ENCODE measurements at regions of chr4 and their contacts with region 1.

Region 1: GRCh38 chr4:103091601-103092223 is 7.9 kb downstream of the BDH2 start:
- DNase-seq: peak; percentile 62
- ATAC-seq: peak; percentile 55
- H3K4me3 ChIP-seq: no peak overlapping the region
- H3K27ac ChIP-seq: no peak overlapping the region
- H3K4me1 ChIP-seq: no peaks in the 10 kb centered on the region
- H3K27me3 ChIP-seq: no peaks in the 10 kb centered on the region
- CTCF ChIP-seq: peak; percentile 80

Region 2: GRCh38 chr4:102620697-102621497 is 470.8 kb before region 1 on chr4:
- CTCF ChIA-PET with region 1: no interaction called
- POLR2A ChIA-PET with region 1: no interaction called
- intact Hi-C with region 1: loop called (anchors 1 kb)
- DNase-seq: peak; percentile 78
- ATAC-seq: peak; percentile 90
- H3K4me3 ChIP-seq: peak overlapping the region; percentile 60
- H3K27ac ChIP-seq: peak overlapping the region; percentile 68
- H3K4me1 ChIP-seq: peaks cover 24% of the 10 kb centered on the region
- H3K27me3 ChIP-seq: no peaks in the 10 kb centered on the region
- CTCF ChIP-seq: peak; percentile 86

Region 3: DNA sequence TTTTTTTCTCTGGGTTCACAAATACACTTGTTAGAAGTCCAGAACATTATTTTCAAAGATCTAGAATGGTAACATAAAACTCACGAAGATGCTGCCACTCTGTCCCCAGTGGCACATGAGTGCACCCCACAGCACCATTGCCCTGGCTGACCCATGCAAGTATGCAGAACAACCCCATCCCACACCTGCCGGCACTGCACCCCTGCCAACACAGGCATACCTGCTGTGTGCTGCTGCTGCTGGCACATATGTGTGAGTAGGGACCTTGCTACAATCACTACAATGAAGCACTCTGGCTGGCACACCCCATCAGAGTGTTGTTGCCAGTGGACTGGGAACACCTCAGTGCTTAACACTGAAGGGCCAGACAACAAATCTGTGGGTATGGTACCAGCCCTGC is 156.0 kb before region 1 on chr4:
- CTCF ChIA-PET with region 1: no interaction called
- POLR2A ChIA-PET with region 1: no interaction called
- intact Hi-C with region 1: no loop called
- DNase-seq: no peak
- ATAC-seq: no peak
- H3K4me3 ChIP-seq: no peak overlapping the region
- H3K27ac ChIP-seq: no peak overlapping the region
- H3K4me1 ChIP-seq: no peaks in the 10 kb centered on the region
- H3K27me3 ChIP-seq: no peaks in the 10 kb centered on the region
- CTCF ChIP-seq: no peak

Region 4: DNA sequence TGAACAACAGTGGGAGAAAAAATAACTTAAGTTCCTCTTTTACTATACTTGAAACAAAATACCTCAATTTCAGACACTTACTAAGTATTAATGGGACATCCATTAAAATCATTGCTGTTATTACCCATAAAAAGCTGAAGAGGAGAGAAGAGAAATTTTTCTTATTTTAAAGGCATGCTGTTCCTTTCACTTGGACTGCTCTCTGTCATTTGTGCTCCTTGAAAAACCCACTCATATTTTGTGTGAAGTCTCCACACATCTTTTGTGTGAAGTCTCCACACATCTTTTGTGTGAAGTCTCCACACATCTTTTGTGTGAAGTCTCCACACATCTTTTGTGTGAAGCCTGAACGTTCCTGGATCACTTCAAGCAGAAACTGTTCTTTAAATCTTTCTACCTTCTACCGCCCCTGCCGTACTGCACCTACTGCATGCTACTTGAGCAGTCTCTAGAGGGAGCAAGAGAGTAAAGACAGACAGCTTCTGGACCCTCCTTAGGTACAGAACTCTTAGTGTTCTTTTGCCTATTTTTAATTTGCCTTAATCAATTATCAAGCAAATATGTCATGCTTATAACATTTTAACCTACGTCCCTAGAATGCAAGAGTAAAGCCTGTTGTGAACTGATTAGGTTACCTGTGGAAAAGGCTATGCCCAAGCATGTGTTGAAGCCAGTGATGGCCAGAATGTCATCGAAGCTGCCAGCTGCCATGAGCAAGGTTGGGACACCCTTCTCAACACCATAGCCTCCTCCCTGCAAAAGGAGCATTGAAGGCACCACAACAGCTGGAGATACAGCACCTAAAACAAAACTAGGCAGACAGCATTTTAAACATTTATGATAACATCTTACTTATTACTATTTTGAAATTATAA is 45.1 kb before region 1 on chr4:
- CTCF ChIA-PET with region 1: no interaction called
- POLR2A ChIA-PET with region 1: no interaction called
- intact Hi-C with region 1: loop called (anchors 1 kb)
- DNase-seq: peak; percentile 59
- ATAC-seq: peak; percentile 87
- H3K4me3 ChIP-seq: no peak overlapping the region
- H3K27ac ChIP-seq: no peak overlapping the region
- H3K4me1 ChIP-seq: no peaks in the 10 kb centered on the region
- H3K27me3 ChIP-seq: no peaks in the 10 kb centered on the region
- CTCF ChIP-seq: peak; percentile 75

Measured in PC-3 (cell line).